ENCODE measurements at regions of chr18 and their contacts with region 1.

Region 1: GRCh38 chr18:46213295-46213694 is 109.1 kb downstream of the HAUS1 start:
- DNase-seq: no peak
- ATAC-seq: peak; percentile 18 to 22
- H3K4me3 ChIP-seq: no peak overlapping the region
- H3K27ac ChIP-seq: no peak overlapping the region
- H3K4me1 ChIP-seq: peaks cover 2% of the 10 kb centered on the region
- H3K27me3 ChIP-seq: no peaks in the 10 kb centered on the region

Region 2: GRCh38 chr18:46250084-46250811 is 37.0 kb after region 1 on chr18:
- intact Hi-C with region 1: no loop called
- DNase-seq: no peak
- ATAC-seq: peak; percentile 46 to 71
- H3K4me3 ChIP-seq: no peak overlapping the region
- H3K27ac ChIP-seq: no peak overlapping the region
- H3K4me1 ChIP-seq: peaks cover 4% of the 10 kb centered on the region
- H3K27me3 ChIP-seq: no peaks in the 10 kb centered on the region

Region 3: GRCh38 chr18:46264235-46264893 is 51.1 kb after region 1 on chr18:
- intact Hi-C with region 1: loop called in 1 of 4 experiments (anchors 10 kb)
- DNase-seq: no peak
- ATAC-seq: peak; percentile 27 to 36
- H3K4me3 ChIP-seq: no peak overlapping the region
- H3K27ac ChIP-seq: no peak overlapping the region
- H3K4me1 ChIP-seq: peaks cover 8% of the 10 kb centered on the region
- H3K27me3 ChIP-seq: no peaks in the 10 kb centered on the region

Measured in right cardiac atrium (tissue), 5 donors.